Lower leg skin (tissue), 4 donors: ENCODE measurements at regions of chr2 and their contacts with region 1.

Region 1: DNA sequence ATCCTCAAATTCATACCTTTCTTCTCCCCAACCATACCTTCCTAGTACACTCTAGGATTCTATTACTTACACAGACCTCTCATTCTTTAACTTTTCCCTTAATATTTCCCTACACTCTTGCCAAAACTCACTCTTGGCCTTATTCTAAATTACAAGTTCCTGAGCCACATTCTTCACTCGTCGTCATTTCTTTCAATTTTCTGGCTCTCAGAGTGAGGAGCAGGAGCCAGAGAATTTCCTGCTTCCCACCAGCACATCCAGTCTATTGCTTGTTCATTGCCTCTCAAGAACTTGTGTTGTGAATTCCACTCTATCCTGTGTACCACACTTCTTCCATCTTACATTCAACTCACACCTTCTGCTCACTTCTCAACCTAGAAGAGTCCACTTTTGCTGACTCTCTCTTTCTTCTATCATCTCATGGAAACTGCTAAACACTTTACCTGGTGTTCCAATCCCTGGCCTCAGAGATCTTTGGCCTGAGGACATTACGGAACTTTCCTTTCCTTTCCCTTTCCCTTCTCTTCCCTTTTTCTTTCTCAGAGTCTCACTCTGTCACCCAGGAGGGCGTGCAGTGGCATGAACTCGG is 171.6 kb downstream of the PLCL1 start:
- DNase-seq: no peak
- H3K4me3 ChIP-seq: no peak overlapping the region
- CTCF ChIP-seq: no peak
- POLR2A ChIP-seq: no peak

Region 2: GRCh38 chr2:197934934-197935289 is 41.1 kb before region 1 on chr2:
- intact Hi-C with region 1: loop called (anchors 2 kb)
- DNase-seq: no peak
- H3K4me3 ChIP-seq: no peak overlapping the region
- CTCF ChIP-seq: no peak
- POLR2A ChIP-seq: no peak

Region 3: DNA sequence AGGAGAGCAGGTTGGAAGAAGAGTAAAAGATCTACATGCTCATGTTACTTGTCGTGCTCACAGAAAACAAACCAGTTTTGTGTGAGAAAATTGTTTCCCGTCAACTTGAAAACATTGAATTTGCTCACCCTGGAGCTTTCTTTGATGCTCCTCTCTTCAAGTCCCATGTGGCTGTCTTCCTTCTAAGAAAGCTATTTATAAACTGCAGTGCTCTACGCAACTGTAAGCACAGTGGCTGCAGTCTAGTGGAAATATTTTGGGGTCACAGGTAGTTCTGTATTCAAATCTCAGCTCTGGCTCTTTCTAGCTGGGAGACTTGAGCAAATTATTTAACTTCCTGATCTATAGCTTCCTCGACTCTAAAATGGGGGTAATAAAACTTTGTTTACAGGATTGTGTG is 40.2 kb after region 1 on chr2:
- intact Hi-C with region 1: loop called (anchors 2 kb)
- DNase-seq: no peak
- H3K4me3 ChIP-seq: no peak overlapping the region
- CTCF ChIP-seq: no peak
- POLR2A ChIP-seq: no peak